B cell (primary cell): ENCODE measurements at regions of chr1 and their contacts with region 1.

Region 1: DNA sequence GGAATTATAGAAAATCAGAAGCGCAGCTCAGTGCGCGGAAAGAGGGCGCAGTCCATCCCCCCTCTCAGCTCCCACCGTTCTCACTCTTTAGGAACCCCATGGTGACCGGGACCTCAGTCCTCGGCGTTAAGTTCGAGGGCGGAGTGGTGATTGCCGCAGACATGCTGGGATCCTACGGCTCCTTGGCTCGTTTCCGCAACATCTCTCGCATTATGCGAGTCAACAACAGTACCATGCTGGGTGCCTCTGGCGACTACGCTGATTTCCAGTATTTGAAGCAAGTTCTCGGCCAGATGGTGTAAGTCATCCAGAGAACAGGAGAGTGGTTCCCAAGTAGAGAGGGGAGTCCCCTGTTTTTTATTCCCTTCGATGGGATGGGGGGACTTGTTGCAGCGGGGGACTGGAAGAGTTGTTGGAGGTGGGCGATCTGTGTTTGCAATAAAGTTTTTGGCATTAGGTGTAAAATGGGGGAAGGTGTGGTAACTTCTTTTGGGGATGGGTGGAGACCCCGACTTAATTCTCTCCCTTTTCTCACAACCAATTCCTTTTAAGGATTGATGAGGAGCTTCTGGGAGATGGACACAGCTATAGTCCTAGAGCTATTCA is 620 bp downstream of the PSMB4 start:
- DNase-seq: no peak
- ATAC-seq: peak; percentile 7
- H3K4me3 ChIP-seq: peak overlapping the region; percentile 91 to 97 (median 92)
- H3K4me3 Mint-ChIP-seq: peak overlapping the region; percentile 93
- H3K27ac ChIP-seq: peak overlapping the region; percentile 88 to 95
- H3K27ac Mint-ChIP-seq: peak overlapping the region; percentile 95
- H3K4me1 ChIP-seq: peaks cover 8 to 21% of the 10 kb centered on the region in 2 donors
- H3K4me1 Mint-ChIP-seq: peaks cover 26% of the 10 kb centered on the region
- H3K27me3 ChIP-seq: no peaks in the 10 kb centered on the region
- H3K27me3 Mint-ChIP-seq: no peaks in the 10 kb centered on the region
- CTCF ChIP-seq: no peak

Region 2: GRCh38 chr1:151175910-151176309 is 224.1 kb before region 1 on chr1 and contains the start of gene TMOD4:
- CTCF ChIA-PET with region 1: no interaction called
- POLR2A ChIA-PET with region 1: no interaction called
- intact Hi-C with region 1: no loop called
- DNase-seq: no peak
- ATAC-seq: peak; percentile 69
- H3K4me3 ChIP-seq: no peak within 1 kb of the TSS
- H3K4me3 Mint-ChIP-seq: no peak within 1 kb of the TSS
- H3K27ac ChIP-seq: no peak within 1 kb of the TSS
- H3K27ac Mint-ChIP-seq: peak within 1 kb of the TSS; percentile 32
- H3K4me1 ChIP-seq: no peaks in the 10 kb centered on the region
- H3K4me1 Mint-ChIP-seq: peaks cover 2% of the 10 kb centered on the region
- H3K27me3 ChIP-seq: no peaks in the 10 kb centered on the region
- H3K27me3 Mint-ChIP-seq: no peaks in the 10 kb centered on the region
- CTCF ChIP-seq: peak; percentile 54
- total RNA-seq, gene TMOD4: 3.5 and 5.1 TPM in 2 replicates

Region 3: DNA sequence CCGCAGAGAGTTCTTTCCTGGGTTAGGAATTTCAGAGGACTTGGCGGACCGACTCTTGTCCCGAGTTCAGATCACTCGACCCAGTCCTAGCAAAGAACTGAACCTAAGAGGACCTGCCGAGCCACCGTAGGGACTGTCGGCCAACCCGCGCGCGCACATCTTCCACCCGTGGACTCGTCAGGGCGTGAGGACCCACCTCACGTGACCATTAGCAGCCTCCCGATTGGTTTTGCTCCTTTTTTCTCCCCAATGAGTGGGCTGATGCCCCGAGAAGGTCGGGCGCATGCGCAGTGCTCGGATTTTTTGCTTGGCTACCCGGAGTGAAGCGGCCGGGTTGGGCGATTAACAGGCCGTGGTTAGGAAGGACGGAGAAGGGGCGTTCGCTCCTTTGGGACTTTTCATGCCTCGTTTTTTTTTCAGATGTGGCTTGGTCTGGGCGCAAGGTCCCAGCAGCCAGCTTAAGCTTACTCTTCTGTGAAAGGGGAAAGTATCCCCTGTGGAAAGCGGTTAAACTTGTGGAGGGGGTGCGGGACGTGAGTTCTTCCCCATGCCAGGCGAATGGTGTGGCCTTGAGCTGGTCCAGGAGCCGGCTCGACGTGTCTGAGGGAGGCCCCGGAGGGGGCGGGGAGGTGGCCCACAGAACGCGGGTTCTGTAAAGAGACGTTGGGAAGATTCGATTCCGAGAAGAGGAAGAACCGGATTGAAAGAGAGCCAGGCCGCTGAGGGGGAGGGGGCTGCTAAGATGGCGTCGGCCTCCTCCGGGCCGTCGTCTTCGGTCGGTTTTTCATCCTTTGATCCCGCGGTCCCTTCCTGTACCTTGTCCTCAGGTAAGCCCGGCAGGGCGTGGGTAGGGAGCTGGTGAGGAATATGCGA is 201.5 kb before region 1 on chr1 and contains the start of gene PIP5K1A:
- CTCF ChIA-PET with region 1: interaction called, 3 read pairs
- POLR2A ChIA-PET with region 1: no interaction called
- intact Hi-C with region 1: loop called (anchors 1 kb)
- DNase-seq: peak; percentile 98
- ATAC-seq: peak; percentile 98
- H3K4me3 ChIP-seq: peak within 1 kb of the TSS; percentile 82 to 96 (median 95)
- H3K4me3 Mint-ChIP-seq: peak within 1 kb of the TSS; percentile 98
- H3K27ac ChIP-seq: peak within 1 kb of the TSS; percentile 87 to 90
- H3K27ac Mint-ChIP-seq: peak within 1 kb of the TSS; percentile 94
- H3K4me1 ChIP-seq: peaks cover 21 to 29% of the 10 kb centered on the region in 2 donors
- H3K4me1 Mint-ChIP-seq: peaks cover 47% of the 10 kb centered on the region
- H3K27me3 ChIP-seq: peaks cover 0 to 2% (median 0%) of the 10 kb centered on the region in 4 experiments
- H3K27me3 Mint-ChIP-seq: no peaks in the 10 kb centered on the region
- CTCF ChIP-seq: no peak
- total RNA-seq, gene PIP5K1A: 76.1 and 78.4 TPM in 2 replicates

Region 4: DNA sequence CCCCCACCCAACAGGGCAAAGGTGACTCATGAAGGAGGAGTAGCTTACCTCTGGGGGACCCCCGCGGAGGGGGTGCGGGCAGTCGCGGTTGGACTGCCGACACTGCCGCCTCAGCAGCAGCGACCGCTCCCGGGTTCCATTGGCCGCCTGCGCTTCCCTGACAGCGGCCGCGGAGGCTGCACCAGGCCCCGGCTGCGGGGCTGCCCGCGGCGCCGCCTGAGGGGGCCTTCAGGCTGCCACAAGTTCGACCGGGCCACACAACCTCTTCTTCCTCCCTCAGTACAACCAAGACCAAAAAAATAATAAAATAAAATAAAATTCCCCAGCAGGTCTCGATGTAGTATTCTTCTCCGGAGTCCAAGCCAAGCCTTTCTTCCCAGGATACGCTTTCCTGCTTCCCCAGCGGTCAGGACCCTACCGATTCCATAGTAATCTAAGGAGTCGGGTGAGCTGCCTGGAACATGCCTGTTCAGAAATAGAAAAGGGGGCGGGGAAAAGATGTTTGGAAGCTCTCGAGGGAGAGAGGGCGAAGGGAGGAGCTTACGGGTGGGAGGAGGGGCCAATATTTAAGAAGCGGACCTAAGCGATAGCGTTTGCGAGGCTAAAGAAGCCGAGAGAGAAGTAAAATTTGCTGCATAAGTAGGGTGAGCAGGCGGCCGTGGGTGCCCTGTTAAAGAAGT is 72.6 kb before region 1 on chr1 and contains the start of gene PI4KB:
- CTCF ChIA-PET with region 1: interaction called, 10 read pairs
- POLR2A ChIA-PET with region 1: interaction called, 18 read pairs
- intact Hi-C with region 1: no loop called
- DNase-seq: peak; percentile 97
- ATAC-seq: peak; percentile 93
- H3K4me3 ChIP-seq: peak within 1 kb of the TSS; percentile 72 to 99 (median 90)
- H3K4me3 Mint-ChIP-seq: peak within 1 kb of the TSS; percentile 93
- H3K27ac ChIP-seq: peak within 1 kb of the TSS; percentile 87 to 89
- H3K27ac Mint-ChIP-seq: peak within 1 kb of the TSS; percentile 96
- H3K4me1 ChIP-seq: peaks cover 21 to 26% of the 10 kb centered on the region in 2 donors
- H3K4me1 Mint-ChIP-seq: peaks cover 40% of the 10 kb centered on the region
- H3K27me3 ChIP-seq: no peaks in the 10 kb centered on the region
- H3K27me3 Mint-ChIP-seq: no peaks in the 10 kb centered on the region
- CTCF ChIP-seq: no peak
- total RNA-seq, gene PI4KB: 110 TPM in 2 replicates

Region 5: GRCh38 chr1:151346769-151347522 is 53.0 kb before region 1 on chr1 and contains the start of gene RFX5:
- CTCF ChIA-PET with region 1: interaction called, 28 read pairs
- POLR2A ChIA-PET with region 1: interaction called, 5 read pairs
- intact Hi-C with region 1: loop called (anchors 1 kb)
- DNase-seq: peak; percentile 99
- ATAC-seq: peak; percentile 91
- H3K4me3 ChIP-seq: peak within 1 kb of the TSS; percentile 81 to 95 (median 85)
- H3K4me3 Mint-ChIP-seq: peak within 1 kb of the TSS; percentile 92
- H3K27ac ChIP-seq: peak within 1 kb of the TSS; percentile 98 to 99
- H3K27ac Mint-ChIP-seq: peak within 1 kb of the TSS; percentile 97
- H3K4me1 ChIP-seq: peaks cover 34 to 44% of the 10 kb centered on the region in 2 donors
- H3K4me1 Mint-ChIP-seq: peaks cover 49% of the 10 kb centered on the region
- H3K27me3 ChIP-seq: no peaks in the 10 kb centered on the region
- H3K27me3 Mint-ChIP-seq: no peaks in the 10 kb centered on the region
- CTCF ChIP-seq: no peak
- total RNA-seq, gene RFX5: 207 and 208 TPM in 2 replicates

Region 6: GRCh38 chr1:151839457-151840405 is 439.7 kb after region 1 on chr1 and contains the start of gene C2CD4D:
- CTCF ChIA-PET with region 1: no interaction called
- POLR2A ChIA-PET with region 1: no interaction called
- intact Hi-C with region 1: loop called (anchors 2 kb)
- DNase-seq: peak; percentile 78
- ATAC-seq: peak; percentile 53
- H3K4me3 ChIP-seq: peak within 1 kb of the TSS in 4 of 5 experiments; percentile 36 to 56 (median 44)
- H3K4me3 Mint-ChIP-seq: peak within 1 kb of the TSS; percentile 87
- H3K27ac ChIP-seq: no peak within 1 kb of the TSS
- H3K27ac Mint-ChIP-seq: peak within 1 kb of the TSS; percentile 81
- H3K4me1 ChIP-seq: peaks cover 36 to 41% of the 10 kb centered on the region in 2 donors
- H3K4me1 Mint-ChIP-seq: peaks cover 38% of the 10 kb centered on the region
- H3K27me3 ChIP-seq: peaks cover 0 to 20% (median 7%) of the 10 kb centered on the region in 4 experiments
- H3K27me3 Mint-ChIP-seq: peaks cover 10% of the 10 kb centered on the region
- CTCF ChIP-seq: no peak
- total RNA-seq, gene C2CD4D: not detected in 2 replicates